Activated CD4-positive, alpha-beta T cell treated with anti-CD3 and anti-CD28 coated beads for 36 hours (primary cell): ENCODE measurements at regions of chr5 and their contacts with region 1.

Region 1: DNA sequence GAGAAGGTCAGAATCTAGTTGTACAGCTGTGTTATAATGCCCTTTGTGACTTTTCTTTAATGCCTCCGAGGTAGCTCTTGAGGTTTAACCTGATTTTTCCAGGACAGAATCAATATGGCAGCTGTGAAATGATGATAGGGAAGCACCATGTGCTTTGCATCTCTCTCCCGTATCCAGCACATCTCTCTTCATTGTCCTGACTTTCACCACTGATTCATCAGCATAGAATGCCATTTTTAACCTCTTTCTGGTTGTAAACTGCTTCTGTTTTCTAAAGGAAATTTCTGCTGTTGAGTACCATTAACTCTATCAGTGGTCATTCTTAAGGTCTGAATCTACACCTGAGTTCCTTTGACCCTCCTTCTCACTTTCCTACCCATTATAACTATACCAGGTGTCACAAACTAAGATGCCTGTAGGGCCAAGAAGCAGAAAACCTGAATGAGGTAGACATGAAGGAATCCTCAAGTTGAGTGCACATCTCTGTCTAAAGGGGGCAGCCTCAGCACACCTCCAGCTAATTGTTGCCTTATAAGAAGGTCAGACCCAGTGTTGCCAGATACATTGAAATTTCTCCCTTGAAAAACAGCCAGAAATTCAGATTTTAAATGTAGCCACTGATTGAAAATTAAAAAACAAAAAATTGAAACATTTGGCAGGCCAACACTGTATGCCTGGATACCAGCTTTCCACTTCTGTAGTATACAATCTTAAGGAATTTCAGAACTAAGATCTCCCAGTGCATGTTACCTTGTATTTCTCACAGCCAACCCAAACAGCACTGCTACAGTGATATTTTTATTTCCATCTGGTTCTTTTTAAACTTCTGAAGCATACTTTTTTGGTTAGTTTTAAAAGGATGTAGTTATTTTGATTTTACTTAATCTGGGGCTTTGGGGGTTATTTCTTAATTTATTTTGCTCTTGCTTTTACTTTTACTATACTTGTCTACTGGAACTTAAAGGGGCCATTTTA is 35.8 kb upstream of the TLX3 start:
- DNase-seq: peak; percentile 23
- ATAC-seq: no peak
- H3K4me3 Mint-ChIP-seq: no peak overlapping the region
- H3K27ac Mint-ChIP-seq: no peak overlapping the region
- H3K4me1 Mint-ChIP-seq: no peaks in the 10 kb centered on the region
- H3K27me3 Mint-ChIP-seq: peaks cover 9% of the 10 kb centered on the region

Region 2: DNA sequence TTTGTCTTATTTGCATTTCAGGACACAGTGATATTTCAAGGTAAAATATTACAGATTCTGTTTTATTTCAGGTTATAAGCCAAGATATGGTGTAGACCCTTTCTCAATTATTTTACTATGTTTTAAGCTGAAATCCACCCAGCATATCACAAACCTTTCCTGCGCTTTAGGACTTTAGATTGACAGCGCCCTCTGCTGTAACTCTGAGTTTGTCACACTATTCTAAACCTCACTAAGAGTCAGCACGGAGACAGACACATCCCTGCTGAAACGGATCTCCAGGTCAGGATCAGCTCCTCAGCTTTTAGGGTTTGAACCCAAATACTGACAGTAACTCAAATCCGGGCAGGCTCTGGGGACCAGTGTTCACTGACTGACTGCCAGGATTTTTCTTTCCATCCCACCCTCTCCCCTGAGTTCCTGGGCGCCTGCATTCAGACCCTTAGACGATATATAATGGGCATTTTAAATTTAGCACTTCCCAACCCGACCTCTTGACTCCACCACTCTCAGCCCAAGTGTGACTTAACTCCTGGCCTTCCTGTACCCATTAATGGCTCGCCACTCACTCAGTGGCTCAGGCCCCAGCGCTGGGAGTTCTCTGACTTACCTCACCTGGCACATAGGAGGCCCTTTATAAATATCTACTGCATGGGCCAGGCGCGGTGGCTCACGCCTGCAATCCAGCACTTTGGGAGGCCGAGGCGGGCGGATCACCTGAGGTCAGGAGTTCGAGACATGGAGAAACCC is 69.3 kb after region 1 on chr5:
- CTCF ChIA-PET with region 1: interaction called, 4 read pairs
- POLR2A ChIA-PET with region 1: no interaction called
- intact Hi-C with region 1: loop called (anchors 1 to 2 kb)
- DNase-seq: peak; percentile 63
- ATAC-seq: peak; percentile 72
- H3K4me3 Mint-ChIP-seq: no peak overlapping the region
- H3K27ac Mint-ChIP-seq: no peak overlapping the region
- H3K4me1 Mint-ChIP-seq: no peaks in the 10 kb centered on the region
- H3K27me3 Mint-ChIP-seq: peaks cover 7% of the 10 kb centered on the region